Right ventricle myocardium superior (tissue), 1 donor: ENCODE measurements at regions of chr4 and their contacts with region 1.

Region 1: GRCh38 chr4:84973856-84974255 is 7.4 kb upstream of the WDFY3 start:
- DNase-seq: no peak
- ATAC-seq: no peak

Region 2: DNA sequence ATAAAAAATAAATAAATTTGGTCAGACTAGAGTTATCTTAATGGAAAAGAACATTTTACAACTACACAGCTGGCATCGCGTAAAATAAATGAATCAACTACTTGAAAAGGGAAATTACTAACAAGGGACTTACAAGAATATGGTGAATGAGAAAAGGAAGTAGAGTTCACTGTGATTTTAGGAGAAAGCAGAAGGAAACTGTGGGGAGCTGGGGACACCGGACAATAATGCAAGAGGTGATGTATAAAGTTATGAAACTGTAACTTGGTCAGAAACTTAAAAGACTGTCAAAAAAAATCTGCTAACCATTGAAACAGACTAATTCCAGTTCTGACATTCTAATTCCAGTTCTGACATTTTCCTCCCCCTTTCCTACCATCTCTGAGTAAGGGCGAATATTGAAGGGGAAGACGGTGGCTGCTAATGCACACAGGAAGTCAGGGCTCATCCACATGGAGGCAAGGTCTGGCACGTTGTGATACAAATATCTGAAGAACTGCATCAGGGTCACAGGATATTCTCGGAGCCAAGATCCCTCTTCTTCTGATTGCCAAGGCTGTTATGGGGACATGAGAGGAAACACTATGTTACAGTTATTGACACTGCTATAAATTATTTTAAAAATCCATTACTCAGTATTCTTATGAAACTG is 220.4 kb before region 1 on chr4:
- intact Hi-C with region 1: loop called (anchors 2 kb)
- DNase-seq: no peak
- ATAC-seq: peak; percentile 60

Region 3: DNA sequence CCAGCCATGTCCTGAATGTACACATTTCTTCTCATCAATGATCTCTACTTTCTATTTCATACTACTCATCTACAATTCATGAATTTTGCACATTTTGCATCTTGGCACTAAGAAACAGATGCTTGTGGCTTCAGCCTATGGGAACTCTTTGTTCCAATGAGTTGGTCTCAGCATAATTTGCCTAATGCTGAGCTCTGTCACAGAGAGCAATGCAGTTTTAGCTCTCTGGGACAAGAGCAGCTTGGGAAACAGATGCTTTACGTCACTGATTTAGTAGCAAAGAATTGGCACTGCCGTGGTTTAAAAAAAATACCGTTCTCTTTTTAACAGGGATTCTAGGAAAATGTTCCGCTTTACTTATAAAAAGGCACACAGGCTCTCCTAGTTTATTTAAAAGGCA is 169.7 kb before region 1 on chr4:
- intact Hi-C with region 1: no loop called
- DNase-seq: no peak
- ATAC-seq: no peak

Region 4: GRCh38 chr4:85050741-85051140 is 76.9 kb after region 1 on chr4:
- intact Hi-C with region 1: no loop called
- DNase-seq: no peak
- ATAC-seq: no peak